ENCODE measurements at regions of chr14 and their contacts with region 1.

Region 1: GRCh38 chr14:57871459-57872080 is 5.7 kb upstream of the SLC35F4 start:
- DNase-seq: peak; percentile 26
- ATAC-seq: peak; percentile 80
- H3K4me3 ChIP-seq: no peak overlapping the region
- H3K27ac ChIP-seq: no peak overlapping the region
- H3K4me1 ChIP-seq: peaks cover 11% of the 10 kb centered on the region
- H3K27me3 ChIP-seq: no peaks in the 10 kb centered on the region
- CTCF ChIP-seq: peak; percentile 54
- EP300 ChIP-seq: no peak
- POLR2A ChIP-seq: no peak
- RAD21 ChIP-seq: no peak

Region 2: GRCh38 chr14:57486767-57487379 is 384.7 kb before region 1 on chr14:
- CTCF ChIA-PET with region 1: no interaction called
- POLR2A ChIA-PET with region 1: no interaction called
- in situ Hi-C with region 1: no loop called
- intact Hi-C with region 1: loop called (anchors 2 kb)
- DNase-seq: peak; percentile 41
- ATAC-seq: peak; percentile 68
- H3K4me3 ChIP-seq: no peak overlapping the region
- H3K27ac ChIP-seq: no peak overlapping the region
- H3K4me1 ChIP-seq: no peaks in the 10 kb centered on the region
- H3K27me3 ChIP-seq: no peaks in the 10 kb centered on the region
- CTCF ChIP-seq: peak; percentile 70
- EP300 ChIP-seq: no peak
- POLR2A ChIP-seq: no peak
- RAD21 ChIP-seq: 0 out of 2 replicates have a peak, but pooled peaks have one; percentile 17

Region 3: DNA sequence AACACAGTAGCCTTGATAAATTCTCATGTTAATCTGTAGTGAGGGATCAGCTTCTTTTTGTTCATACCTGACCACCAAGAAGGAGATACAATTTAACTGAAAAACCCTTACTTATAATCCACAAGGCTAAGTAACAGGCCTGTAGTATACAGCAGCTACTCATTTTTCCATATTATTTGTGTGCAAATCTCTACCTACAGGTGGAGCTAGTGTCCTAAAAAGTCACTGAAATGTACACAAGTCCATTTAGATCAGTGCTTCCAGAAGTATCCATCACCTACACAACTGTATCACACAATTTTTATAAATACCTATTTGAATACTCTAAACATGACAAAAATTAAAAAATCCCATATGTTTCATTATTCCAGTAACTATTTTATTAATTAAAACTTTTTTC is 178.9 kb before region 1 on chr14:
- CTCF ChIA-PET with region 1: interaction called, 8 read pairs
- POLR2A ChIA-PET with region 1: no interaction called
- in situ Hi-C with region 1: no loop called
- intact Hi-C with region 1: loop called (anchors 1 kb)
- DNase-seq: peak; percentile 39
- ATAC-seq: peak; percentile 68
- H3K4me3 ChIP-seq: no peak overlapping the region
- H3K27ac ChIP-seq: no peak overlapping the region
- H3K4me1 ChIP-seq: no peaks in the 10 kb centered on the region
- H3K27me3 ChIP-seq: no peaks in the 10 kb centered on the region
- CTCF ChIP-seq: peak; percentile 45
- EP300 ChIP-seq: no peak
- POLR2A ChIP-seq: no peak
- RAD21 ChIP-seq: no peak

Region 4: GRCh38 chr14:57845802-57846531 is 25.6 kb before region 1 on chr14:
- CTCF ChIA-PET with region 1: no interaction called
- POLR2A ChIA-PET with region 1: no interaction called
- in situ Hi-C with region 1: no loop called
- intact Hi-C with region 1: no loop called
- DNase-seq: no peak
- ATAC-seq: no peak
- H3K4me3 ChIP-seq: no peak overlapping the region
- H3K27ac ChIP-seq: no peak overlapping the region
- H3K4me1 ChIP-seq: no peaks in the 10 kb centered on the region
- H3K27me3 ChIP-seq: no peaks in the 10 kb centered on the region
- CTCF ChIP-seq: no peak
- EP300 ChIP-seq: no peak
- POLR2A ChIP-seq: no peak
- RAD21 ChIP-seq: no peak

Region 5: GRCh38 chr14:57974896-57975295 is 103.3 kb after region 1 on chr14:
- CTCF ChIA-PET with region 1: no interaction called
- POLR2A ChIA-PET with region 1: no interaction called
- in situ Hi-C with region 1: no loop called
- intact Hi-C with region 1: no loop called
- DNase-seq: no peak
- ATAC-seq: no peak
- H3K4me3 ChIP-seq: no peak overlapping the region
- H3K27ac ChIP-seq: no peak overlapping the region
- H3K4me1 ChIP-seq: no peaks in the 10 kb centered on the region
- H3K27me3 ChIP-seq: no peaks in the 10 kb centered on the region
- CTCF ChIP-seq: no peak
- EP300 ChIP-seq: no peak
- POLR2A ChIP-seq: no peak
- RAD21 ChIP-seq: no peak